Activated B cell treated with CpG ODN at 0.5 μM for 24 hours (primary cell): ENCODE measurements at regions of chr20 and their contacts with region 1.

Region 1: GRCh38 chr20:46814366-46815242 is 80.0 kb upstream of the EYA2 start:
- DNase-seq: no peak
- ATAC-seq: no peak
- H3K4me3 Mint-ChIP-seq: no peak overlapping the region
- H3K27ac Mint-ChIP-seq: no peak overlapping the region
- H3K4me1 Mint-ChIP-seq: no peaks in the 10 kb centered on the region
- H3K27me3 Mint-ChIP-seq: peaks cover 40% of the 10 kb centered on the region
- CTCF ChIP-seq: no peak

Region 2: DNA sequence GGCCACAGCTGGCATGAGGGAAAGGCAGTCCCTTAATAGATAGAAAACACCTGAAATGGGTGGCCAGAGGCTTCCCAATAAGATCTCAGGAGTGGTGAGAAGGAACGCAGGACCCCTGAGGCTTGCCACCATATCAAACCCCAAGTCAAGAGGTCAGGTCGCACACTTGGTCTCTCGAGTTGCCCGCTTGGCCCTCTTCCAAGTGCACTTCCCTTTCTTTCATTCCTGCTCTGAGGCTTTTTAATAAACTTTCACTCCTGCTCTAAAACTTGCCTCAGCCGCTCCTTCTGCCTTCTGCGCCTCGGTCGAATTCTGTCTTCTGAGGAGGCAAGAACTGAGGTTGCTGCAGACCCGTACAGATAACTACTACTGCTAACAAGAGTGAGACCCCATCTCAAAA is 40.9 kb before region 1 on chr20:
- CTCF ChIA-PET with region 1: no interaction called
- POLR2A ChIA-PET with region 1: no interaction called
- intact Hi-C with region 1: no loop called
- DNase-seq: no peak
- ATAC-seq: no peak
- H3K4me3 Mint-ChIP-seq: no peak overlapping the region
- H3K27ac Mint-ChIP-seq: no peak overlapping the region
- H3K4me1 Mint-ChIP-seq: no peaks in the 10 kb centered on the region
- H3K27me3 Mint-ChIP-seq: peaks cover 19% of the 10 kb centered on the region
- CTCF ChIP-seq: no peak

Region 3: GRCh38 chr20:46833360-46833759 is 18.8 kb after region 1 on chr20:
- CTCF ChIA-PET with region 1: no interaction called
- POLR2A ChIA-PET with region 1: no interaction called
- intact Hi-C with region 1: loop called (anchors 1 kb)
- DNase-seq: no peak
- ATAC-seq: no peak
- H3K4me3 Mint-ChIP-seq: no peak overlapping the region
- H3K27ac Mint-ChIP-seq: no peak overlapping the region
- H3K4me1 Mint-ChIP-seq: no peaks in the 10 kb centered on the region
- H3K27me3 Mint-ChIP-seq: peaks cover 13% of the 10 kb centered on the region
- CTCF ChIP-seq: no peak

Region 4: DNA sequence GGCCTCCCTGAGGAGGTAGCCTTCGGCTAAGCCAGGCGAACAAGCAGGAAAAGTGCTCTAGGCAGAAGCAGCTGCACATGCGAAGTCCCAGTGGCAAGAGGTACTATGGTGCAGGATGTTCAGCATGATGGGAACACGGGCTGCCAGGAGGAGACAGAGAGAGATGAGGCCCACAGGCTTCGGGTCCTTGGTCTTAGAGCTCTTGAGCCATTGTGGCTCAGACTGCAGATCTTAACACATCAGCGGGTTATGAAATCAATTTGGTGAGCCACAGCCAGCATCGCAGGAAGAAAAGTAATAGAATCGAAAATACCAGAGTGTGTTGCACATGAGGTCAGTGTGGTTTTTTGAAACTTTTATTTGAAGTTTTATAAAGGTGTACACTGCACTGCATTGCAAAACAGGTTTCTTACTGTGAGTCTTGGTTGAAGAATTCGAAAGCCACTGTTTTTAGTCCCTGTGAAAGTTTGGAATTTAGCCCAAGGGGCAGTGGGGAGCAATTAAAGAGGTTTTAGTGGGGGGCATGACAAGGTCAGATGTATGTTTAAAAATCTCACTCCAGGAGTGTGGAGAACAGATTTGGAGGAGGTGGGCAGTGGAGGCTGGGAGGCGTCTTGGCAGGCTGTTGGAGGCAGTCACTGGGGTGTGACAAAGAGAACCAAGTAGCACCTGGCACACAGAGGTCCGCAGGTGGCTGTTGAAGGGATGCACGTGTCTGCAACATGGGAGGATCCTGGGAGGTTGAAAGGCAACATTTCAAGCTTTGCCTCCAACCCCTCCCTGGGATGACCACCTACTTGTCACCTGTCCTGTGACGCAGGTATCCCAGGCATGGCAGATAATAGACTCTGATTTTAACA is 149.4 kb after region 1 on chr20:
- CTCF ChIA-PET with region 1: no interaction called
- POLR2A ChIA-PET with region 1: no interaction called
- intact Hi-C with region 1: no loop called
- DNase-seq: no peak
- ATAC-seq: no peak
- H3K4me3 Mint-ChIP-seq: no peak overlapping the region
- H3K27ac Mint-ChIP-seq: no peak overlapping the region
- H3K4me1 Mint-ChIP-seq: no peaks in the 10 kb centered on the region
- H3K27me3 Mint-ChIP-seq: peaks cover 2% of the 10 kb centered on the region
- CTCF ChIP-seq: no peak